Activated CD4-positive, alpha-beta T cell treated with anti-CD3 and anti-CD28 coated beads for 36 hours (primary cell): ENCODE measurements at regions of chr1 and their contacts with region 1.

Region 1: GRCh38 chr1:26853156-26853555 is 9.8 kb upstream of the SFN start:
- DNase-seq: peak; percentile 87
- ATAC-seq: peak; percentile 84
- H3K4me3 Mint-ChIP-seq: no peak overlapping the region
- H3K27ac Mint-ChIP-seq: no peak overlapping the region
- H3K4me1 Mint-ChIP-seq: no peaks in the 10 kb centered on the region
- H3K27me3 Mint-ChIP-seq: no peaks in the 10 kb centered on the region

Region 2: GRCh38 chr1:26555550-26556510 is 297.3 kb before region 1 on chr1:
- CTCF ChIA-PET with region 1: no interaction called
- POLR2A ChIA-PET with region 1: no interaction called
- intact Hi-C with region 1: no loop called
- DNase-seq: no peak
- ATAC-seq: no peak
- H3K4me3 Mint-ChIP-seq: no peak overlapping the region
- H3K27ac Mint-ChIP-seq: peak overlapping the region; percentile 63
- H3K4me1 Mint-ChIP-seq: peaks cover 2% of the 10 kb centered on the region
- H3K27me3 Mint-ChIP-seq: no peaks in the 10 kb centered on the region

Region 3: GRCh38 chr1:26874896-26875295 is 21.7 kb after region 1 on chr1:
- CTCF ChIA-PET with region 1: interaction called, 4 read pairs
- POLR2A ChIA-PET with region 1: no interaction called
- intact Hi-C with region 1: loop called (anchors 1 kb)
- DNase-seq: no peak
- ATAC-seq: no peak
- H3K4me3 Mint-ChIP-seq: no peak overlapping the region
- H3K27ac Mint-ChIP-seq: no peak overlapping the region
- H3K4me1 Mint-ChIP-seq: peaks cover 2% of the 10 kb centered on the region
- H3K27me3 Mint-ChIP-seq: no peaks in the 10 kb centered on the region